Adrenal gland (tissue), 19 donors: ENCODE measurements at regions of chr17 and their contacts with region 1.

Region 1: DNA sequence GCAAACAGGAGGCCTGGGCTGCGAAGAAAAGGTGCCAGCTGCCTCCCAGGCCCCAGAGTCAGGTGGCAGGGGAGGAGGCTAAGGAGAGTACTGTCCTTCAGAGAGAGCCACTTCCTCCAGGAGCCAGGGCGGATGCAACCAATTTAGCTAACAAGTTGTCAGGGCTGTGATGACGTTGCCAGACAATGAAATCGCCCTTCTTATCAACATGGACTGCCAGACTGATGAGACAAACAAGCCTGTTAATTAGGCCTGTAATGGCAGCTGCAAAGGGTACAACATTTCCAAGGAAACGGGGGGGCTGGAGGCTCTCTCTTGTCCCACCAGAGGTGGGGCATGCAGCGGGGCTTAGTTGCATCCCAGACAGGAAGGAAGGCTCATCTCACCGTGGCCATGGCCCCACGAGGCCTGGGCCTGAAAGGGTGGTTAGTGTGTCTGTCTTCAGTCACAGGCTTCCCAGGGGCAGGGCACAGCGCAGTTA is 111.8 kb downstream of the SDK2 start:
- DNase-seq: peak in 1 of 7 donors; percentile 83
- H3K4me3 ChIP-seq: no peak overlapping the region
- H3K27ac ChIP-seq: no peak overlapping the region
- H3K4me1 ChIP-seq: no peaks in the 10 kb centered on the region
- H3K27me3 ChIP-seq: no peaks in the 10 kb centered on the region
- CTCF ChIP-seq: no peak
- POLR2A ChIP-seq: no peak

Region 2: GRCh38 chr17:73474370-73474988 is 58.0 kb before region 1 on chr17:
- intact Hi-C with region 1: loop called in 1 of 2 experiments (anchors 10 kb)
- DNase-seq: peak; percentile 74 to 93 (median 81)
- H3K4me3 ChIP-seq: no peak overlapping the region
- H3K27ac ChIP-seq: peak overlapping the region in 1 of 5 donors; percentile 59
- H3K4me1 ChIP-seq: peaks cover 0 to 5% of the 10 kb centered on the region in 2 donors
- H3K27me3 ChIP-seq: no peaks in the 10 kb centered on the region
- CTCF ChIP-seq: no peak
- POLR2A ChIP-seq: no peak